ENCODE measurements at regions of chr12 and their contacts with region 1.

Region 1: GRCh38 chr12:26853303-26854030 is 20.5 kb upstream of the ITPR2 start:
- DNase-seq: peak; percentile 53
- H3K4me3 Mint-ChIP-seq: no peak overlapping the region
- H3K27ac Mint-ChIP-seq: no peak overlapping the region
- H3K4me1 Mint-ChIP-seq: no peaks in the 10 kb centered on the region
- H3K27me3 Mint-ChIP-seq: peaks cover 9% of the 10 kb centered on the region

Region 2: GRCh38 chr12:26760657-26761293 is 92.7 kb before region 1 on chr12:
- intact Hi-C with region 1: no loop called
- DNase-seq: no peak
- H3K4me3 Mint-ChIP-seq: no peak overlapping the region
- H3K27ac Mint-ChIP-seq: no peak overlapping the region
- H3K4me1 Mint-ChIP-seq: no peaks in the 10 kb centered on the region
- H3K27me3 Mint-ChIP-seq: no peaks in the 10 kb centered on the region

Region 3: DNA sequence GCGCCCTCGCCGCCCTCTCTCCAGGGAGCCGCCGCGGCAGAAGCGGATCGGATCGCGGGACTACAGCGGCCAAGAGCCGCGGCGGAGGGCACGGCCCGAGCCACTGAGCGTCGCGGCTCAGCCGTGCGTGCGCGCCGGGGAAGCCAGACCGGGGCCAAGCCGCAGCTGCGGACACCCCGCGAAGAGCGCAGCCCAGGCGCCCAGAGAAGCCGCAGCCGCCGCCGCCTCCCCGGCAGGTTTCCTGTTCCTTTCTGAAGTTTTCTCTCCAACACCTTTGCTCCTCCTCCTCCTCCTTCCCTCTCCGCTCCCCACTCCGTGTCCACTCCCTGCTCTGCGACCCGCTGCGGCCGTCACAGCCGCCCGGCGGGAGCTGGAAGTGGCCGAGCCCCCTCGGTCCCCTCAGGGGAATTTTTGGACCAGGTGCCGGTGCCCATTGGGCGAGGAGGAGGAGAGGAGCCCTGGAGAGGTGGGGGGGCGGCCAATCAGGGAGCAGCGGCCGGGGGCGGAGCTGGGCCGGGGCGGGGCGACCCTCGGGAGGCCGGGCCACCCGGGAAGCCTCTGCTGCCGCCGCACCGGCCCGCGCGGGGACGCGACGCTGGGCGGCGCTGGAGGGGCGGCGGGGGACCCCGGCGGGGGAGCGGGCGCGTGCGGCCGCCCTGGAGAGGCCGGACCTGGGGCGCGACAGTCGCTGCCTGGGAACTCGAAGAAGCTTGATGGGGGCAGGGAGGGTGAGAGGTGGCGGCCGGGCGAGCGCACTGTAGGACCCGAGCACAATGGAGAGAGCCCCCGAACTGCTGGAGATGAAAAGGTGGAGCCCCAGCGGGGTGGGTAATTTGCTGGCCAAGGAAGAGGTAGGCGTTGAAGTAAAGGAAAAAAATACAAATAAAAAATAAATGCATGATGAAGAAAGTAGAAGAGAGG is 20.4 kb before region 1 on chr12 and contains the start of gene ITPR2:
- intact Hi-C with region 1: loop called (anchors 2 kb)
- DNase-seq: peak; percentile 88
- H3K4me3 Mint-ChIP-seq: peak within 1 kb of the TSS; percentile 95
- H3K27ac Mint-ChIP-seq: peak within 1 kb of the TSS; percentile 98
- H3K4me1 Mint-ChIP-seq: peaks cover 46% of the 10 kb centered on the region
- H3K27me3 Mint-ChIP-seq: no peaks in the 10 kb centered on the region
- total RNA-seq, gene ITPR2: 49.3 and 49.6 TPM in 2 replicates

Region 4: DNA sequence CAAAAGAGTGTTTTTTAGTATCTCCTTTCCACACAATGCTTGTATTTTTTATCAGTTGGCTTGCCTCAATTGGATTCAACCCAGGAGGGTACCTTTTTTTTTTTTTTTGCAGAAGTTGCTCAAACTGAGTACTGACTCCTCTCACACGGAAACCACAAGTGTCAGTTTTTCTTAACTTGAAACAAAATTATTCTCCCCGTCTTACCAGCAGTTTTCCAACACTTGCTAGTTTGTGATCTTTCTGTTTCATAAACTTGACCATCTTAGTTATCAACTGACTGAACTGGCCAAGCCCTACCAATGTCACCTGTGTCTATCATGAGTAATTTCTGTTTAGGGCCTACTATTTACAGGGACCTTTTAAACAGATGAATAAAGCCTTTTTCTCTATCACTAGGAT is 13.6 kb after region 1 on chr12:
- intact Hi-C with region 1: loop called (anchors 2 kb)
- DNase-seq: no peak
- H3K4me3 Mint-ChIP-seq: no peak overlapping the region
- H3K27ac Mint-ChIP-seq: peak overlapping the region; percentile 61
- H3K4me1 Mint-ChIP-seq: peaks cover 41% of the 10 kb centered on the region
- H3K27me3 Mint-ChIP-seq: peaks cover 2% of the 10 kb centered on the region

Region 5: DNA sequence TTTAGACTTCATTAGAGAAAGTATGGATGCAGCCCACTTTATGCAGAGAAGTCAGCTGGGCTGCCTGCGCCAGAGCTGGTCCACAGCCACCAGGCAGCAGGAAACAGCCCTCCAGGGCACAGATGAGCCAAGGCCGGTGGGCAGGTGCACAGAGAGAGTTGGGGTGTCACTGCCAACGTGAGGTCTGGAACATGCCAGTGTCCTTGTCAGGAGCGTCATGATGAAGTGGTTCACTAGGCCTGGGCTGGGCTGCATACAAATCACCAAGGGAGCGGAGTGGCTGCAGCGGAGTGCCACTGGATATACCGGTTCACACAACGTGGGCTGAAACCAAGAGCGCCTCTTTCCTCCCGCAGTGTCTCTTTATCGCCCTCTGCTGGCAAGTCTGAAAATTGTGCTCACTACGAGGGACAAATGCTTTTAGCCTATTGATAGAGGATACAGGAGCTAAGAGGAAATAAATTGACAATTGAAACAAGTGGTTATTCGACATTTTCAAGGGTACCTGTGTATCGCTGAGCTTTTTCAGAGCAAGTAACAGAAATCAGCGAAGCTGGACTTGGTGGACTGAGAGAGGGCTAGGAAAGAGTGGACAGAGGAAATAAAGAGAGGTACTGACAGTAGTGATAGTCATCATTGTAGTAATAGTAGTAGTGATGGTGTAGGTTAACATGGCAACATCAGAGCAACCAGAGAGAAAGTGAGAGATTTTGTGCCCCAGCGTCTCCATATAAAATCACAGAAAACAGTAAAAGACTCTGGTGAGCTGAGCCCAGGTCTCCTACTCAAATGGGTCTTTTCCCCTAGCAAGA is 31.5 kb after region 1 on chr12:
- intact Hi-C with region 1: loop called (anchors 1 kb)
- DNase-seq: peak; percentile 78
- H3K4me3 Mint-ChIP-seq: no peak overlapping the region
- H3K27ac Mint-ChIP-seq: no peak overlapping the region
- H3K4me1 Mint-ChIP-seq: peaks cover 16% of the 10 kb centered on the region
- H3K27me3 Mint-ChIP-seq: peaks cover 11% of the 10 kb centered on the region

Region 6: DNA sequence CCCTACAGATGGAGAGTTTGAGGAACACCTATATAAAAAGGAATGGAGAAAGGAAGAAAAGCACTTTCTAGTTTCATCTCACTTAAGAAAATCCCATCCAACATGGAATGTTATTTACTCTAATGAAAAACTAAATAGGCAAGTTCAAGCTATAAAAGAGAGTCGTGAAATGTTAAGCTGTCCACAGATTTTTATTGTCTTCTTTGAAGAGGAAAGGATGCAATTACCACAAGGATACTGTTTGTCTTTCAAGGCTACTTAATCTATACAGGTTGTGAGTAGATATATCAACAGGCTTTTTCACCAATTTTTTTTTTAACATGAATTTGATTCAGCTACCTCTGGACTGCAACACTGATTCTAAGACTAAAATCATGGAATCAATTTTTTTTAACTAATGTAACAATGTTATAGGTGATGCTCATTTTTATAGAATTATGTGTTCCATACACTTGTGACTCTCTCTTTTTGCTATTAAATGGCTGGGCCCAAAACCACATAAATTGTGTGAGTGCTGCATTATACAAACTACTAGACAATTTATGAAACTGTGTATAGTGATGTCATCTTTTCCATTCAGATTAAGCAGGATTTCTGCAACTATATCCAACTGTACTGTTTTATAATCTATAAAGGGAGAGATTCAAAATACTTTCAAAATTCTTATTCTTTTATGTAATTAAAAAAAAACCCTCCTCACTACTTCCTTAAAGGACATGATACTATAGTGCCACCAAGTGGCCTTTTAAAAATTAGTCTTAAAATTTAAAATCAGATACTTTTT is 452.4 kb after region 1 on chr12:
- intact Hi-C with region 1: loop called (anchors 10 kb)
- DNase-seq: no peak
- H3K4me3 Mint-ChIP-seq: no peak overlapping the region
- H3K27ac Mint-ChIP-seq: peak overlapping the region; percentile 28
- H3K4me1 Mint-ChIP-seq: peaks cover 17% of the 10 kb centered on the region
- H3K27me3 Mint-ChIP-seq: no peaks in the 10 kb centered on the region